A673 (cell line): ENCODE measurements at regions of chr11 and their contacts with region 1.

Region 1: GRCh38 chr11:93295921-93296575 is 34.5 kb upstream of the DEUP1 start:
- DNase-seq: no peak
- H3K4me3 ChIP-seq: no peak overlapping the region
- H3K27ac ChIP-seq: no peak overlapping the region
- H3K4me1 ChIP-seq: no peaks in the 10 kb centered on the region
- H3K27me3 ChIP-seq: no peaks in the 10 kb centered on the region
- CTCF ChIP-seq: no peak

Region 2: DNA sequence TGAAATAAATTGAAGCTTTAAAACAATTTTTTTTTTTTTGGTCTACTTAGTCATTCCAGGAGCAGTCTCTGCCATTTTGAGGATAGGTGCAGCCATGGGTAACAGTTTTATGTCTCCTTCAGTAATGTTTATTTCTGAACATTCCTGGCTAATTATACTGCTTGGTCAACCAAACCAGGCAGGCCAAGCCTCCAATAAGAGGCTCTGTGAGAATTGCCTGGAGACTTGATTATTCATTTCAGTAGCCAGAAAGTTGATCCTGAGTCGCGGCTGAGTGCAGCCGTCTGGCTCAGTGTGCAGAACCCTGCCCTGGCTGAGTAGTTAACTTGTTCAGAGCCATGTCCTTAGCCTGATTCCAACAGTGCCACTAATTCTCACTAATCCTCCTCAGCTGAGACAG is 1435.4 kb before region 1 on chr11:
- CTCF ChIA-PET with region 1: no interaction called
- POLR2A ChIA-PET with region 1: interaction called, 16 read pairs
- intact Hi-C with region 1: no loop called
- DNase-seq: no peak
- H3K4me3 ChIP-seq: no peak overlapping the region
- H3K27ac ChIP-seq: no peak overlapping the region
- H3K4me1 ChIP-seq: peaks cover 16% of the 10 kb centered on the region
- H3K27me3 ChIP-seq: no peaks in the 10 kb centered on the region
- CTCF ChIP-seq: no peak